ENCODE measurements at regions of chr10 and their contacts with region 1.

Region 1: DNA sequence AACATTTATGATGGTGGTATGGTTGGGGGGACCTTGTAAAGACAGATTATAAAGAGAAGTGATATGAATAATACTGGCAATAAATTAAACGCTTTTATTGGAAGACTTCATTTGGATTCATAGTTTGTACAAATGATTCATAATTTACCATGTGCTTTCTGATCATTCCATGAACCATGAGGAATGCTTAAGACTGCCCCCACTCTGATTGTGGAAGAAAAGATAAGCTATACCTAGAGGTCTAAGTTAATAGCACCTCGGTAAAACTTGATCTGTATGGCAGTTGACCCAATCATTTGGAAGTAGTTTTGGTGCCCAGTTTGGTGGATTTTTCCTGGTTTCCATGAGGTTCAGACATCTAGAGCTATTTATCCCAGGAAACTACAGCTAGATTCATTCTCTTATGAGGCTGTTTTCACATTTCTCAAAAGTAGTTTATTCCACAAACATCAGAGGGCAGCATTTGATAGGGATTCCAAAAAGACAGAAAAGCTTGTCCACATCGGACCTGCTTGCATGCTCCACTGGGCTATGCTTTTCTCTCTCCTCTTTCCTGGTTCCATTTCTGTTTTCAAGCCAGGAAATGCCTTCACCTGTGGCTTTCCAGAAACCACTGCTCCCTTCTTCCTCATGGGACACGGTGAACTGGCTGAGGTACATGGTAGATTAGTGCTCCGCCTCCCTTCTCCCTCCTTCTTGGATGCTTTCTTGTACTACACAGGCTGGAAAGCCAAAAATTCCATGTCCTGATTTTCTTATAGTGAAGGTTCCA is 29.2 kb downstream of the TFAM start:
- DNase-seq: peak; percentile 87
- ATAC-seq: peak; percentile 81
- H3K4me3 ChIP-seq: no peak overlapping the region
- H3K27ac ChIP-seq: no peak overlapping the region
- H3K4me1 ChIP-seq: peaks cover 22% of the 10 kb centered on the region
- H3K27me3 ChIP-seq: no peaks in the 10 kb centered on the region
- CTCF ChIP-seq: peak; percentile 87

Region 2: GRCh38 chr10:58291538-58292174 is 122.8 kb before region 1 on chr10:
- CTCF ChIA-PET with region 1: no interaction called
- POLR2A ChIA-PET with region 1: no interaction called
- intact Hi-C with region 1: no loop called
- DNase-seq: peak; percentile 78
- ATAC-seq: peak; percentile 95
- H3K4me3 ChIP-seq: no peak overlapping the region
- H3K27ac ChIP-seq: no peak overlapping the region
- H3K4me1 ChIP-seq: no peaks in the 10 kb centered on the region
- H3K27me3 ChIP-seq: no peaks in the 10 kb centered on the region
- CTCF ChIP-seq: peak; percentile 98

Region 3: DNA sequence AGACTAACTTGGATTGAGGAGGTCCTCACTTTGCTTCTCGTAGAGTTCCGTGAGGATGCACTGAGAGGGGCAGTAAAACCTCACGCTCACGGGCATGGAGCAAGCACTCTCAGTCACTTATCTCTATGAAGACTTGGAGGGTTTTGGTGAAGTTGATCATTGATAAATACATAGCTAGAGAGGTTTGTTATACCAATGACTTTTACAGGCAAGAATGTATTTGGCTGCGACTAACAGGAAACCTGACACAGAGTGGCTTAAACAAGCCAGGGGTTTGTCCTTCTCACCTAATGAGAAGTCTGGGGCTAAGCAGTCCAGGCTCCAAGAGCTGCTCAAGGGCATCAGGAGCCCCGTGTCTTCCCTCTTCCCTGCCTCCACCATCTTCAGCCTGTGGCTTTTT is 104.3 kb after region 1 on chr10:
- CTCF ChIA-PET with region 1: no interaction called
- POLR2A ChIA-PET with region 1: no interaction called
- intact Hi-C with region 1: loop called (anchors 5 kb)
- DNase-seq: peak; percentile 57
- ATAC-seq: peak; percentile 53
- H3K4me3 ChIP-seq: 0 out of 2 replicates have a peak overlapping the region, but pooled peaks have one; percentile 5
- H3K27ac ChIP-seq: no peak overlapping the region
- H3K4me1 ChIP-seq: peaks cover 23% of the 10 kb centered on the region; the same call in 1 of the 2 replicates
- H3K27me3 ChIP-seq: peaks cover 20% of the 10 kb centered on the region
- CTCF ChIP-seq: no peak

Region 4: GRCh38 chr10:58531084-58531695 is 116.7 kb after region 1 on chr10:
- CTCF ChIA-PET with region 1: interaction called, 25 read pairs
- POLR2A ChIA-PET with region 1: no interaction called
- intact Hi-C with region 1: loop called (anchors 1 kb)
- DNase-seq: peak; percentile 97
- ATAC-seq: peak; percentile 97
- H3K4me3 ChIP-seq: no peak overlapping the region
- H3K27ac ChIP-seq: no peak overlapping the region
- H3K4me1 ChIP-seq: no peaks in the 10 kb centered on the region
- H3K27me3 ChIP-seq: peaks cover 4% of the 10 kb centered on the region; the same call in 1 of the 2 replicates
- CTCF ChIP-seq: peak; percentile 93

Region 5: DNA sequence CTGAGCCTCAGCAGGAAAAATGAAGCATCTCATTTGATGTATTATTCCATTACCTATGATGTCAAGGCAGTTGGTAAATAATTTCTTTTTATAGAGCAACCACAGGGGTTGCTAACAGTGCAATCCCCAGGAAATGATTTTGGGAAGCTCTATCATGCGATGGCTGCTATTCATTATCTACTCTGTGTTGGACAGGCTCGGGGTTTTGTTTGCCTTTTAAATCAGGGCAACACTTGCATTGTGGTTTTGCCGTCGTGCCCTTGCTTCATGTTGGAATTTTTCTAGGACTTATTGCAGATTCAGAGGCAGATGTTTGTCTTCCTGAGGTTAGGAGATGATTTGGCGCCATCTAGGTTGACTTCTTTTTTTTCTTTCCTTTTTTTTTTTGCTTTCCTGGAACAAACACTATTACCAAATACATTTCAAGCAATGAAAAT is 226.7 kb after region 1 on chr10:
- CTCF ChIA-PET with region 1: interaction called, 10 read pairs
- POLR2A ChIA-PET with region 1: no interaction called
- intact Hi-C with region 1: loop called (anchors 1 kb)
- DNase-seq: peak; percentile 78
- ATAC-seq: peak; percentile 89
- H3K4me3 ChIP-seq: peak overlapping the region; percentile 9; the same call in 1 of the 2 replicates
- H3K27ac ChIP-seq: peak overlapping the region; percentile 32
- H3K4me1 ChIP-seq: peaks cover 22% of the 10 kb centered on the region
- H3K27me3 ChIP-seq: peaks cover 16% of the 10 kb centered on the region
- CTCF ChIP-seq: peak; percentile 88

Region 6: GRCh38 chr10:59234816-59235429 is 820.5 kb after region 1 on chr10:
- CTCF ChIA-PET with region 1: no interaction called
- POLR2A ChIA-PET with region 1: no interaction called
- intact Hi-C with region 1: loop called (anchors 2 kb)
- DNase-seq: peak; percentile 78
- ATAC-seq: peak; percentile 64
- H3K4me3 ChIP-seq: no peak overlapping the region
- H3K27ac ChIP-seq: no peak overlapping the region
- H3K4me1 ChIP-seq: peaks cover 11% of the 10 kb centered on the region
- H3K27me3 ChIP-seq: peaks cover 21% of the 10 kb centered on the region
- CTCF ChIP-seq: peak; percentile 97

Measured in PC-3 (cell line).